ENCODE measurements at regions of chr16 and their contacts with region 1.

Region 1: GRCh38 chr16:87062569-87063442 is 254.4 kb downstream of the C16orf95 start:
- DNase-seq: peak; percentile 81
- ATAC-seq: peak; percentile 95

Region 2: DNA sequence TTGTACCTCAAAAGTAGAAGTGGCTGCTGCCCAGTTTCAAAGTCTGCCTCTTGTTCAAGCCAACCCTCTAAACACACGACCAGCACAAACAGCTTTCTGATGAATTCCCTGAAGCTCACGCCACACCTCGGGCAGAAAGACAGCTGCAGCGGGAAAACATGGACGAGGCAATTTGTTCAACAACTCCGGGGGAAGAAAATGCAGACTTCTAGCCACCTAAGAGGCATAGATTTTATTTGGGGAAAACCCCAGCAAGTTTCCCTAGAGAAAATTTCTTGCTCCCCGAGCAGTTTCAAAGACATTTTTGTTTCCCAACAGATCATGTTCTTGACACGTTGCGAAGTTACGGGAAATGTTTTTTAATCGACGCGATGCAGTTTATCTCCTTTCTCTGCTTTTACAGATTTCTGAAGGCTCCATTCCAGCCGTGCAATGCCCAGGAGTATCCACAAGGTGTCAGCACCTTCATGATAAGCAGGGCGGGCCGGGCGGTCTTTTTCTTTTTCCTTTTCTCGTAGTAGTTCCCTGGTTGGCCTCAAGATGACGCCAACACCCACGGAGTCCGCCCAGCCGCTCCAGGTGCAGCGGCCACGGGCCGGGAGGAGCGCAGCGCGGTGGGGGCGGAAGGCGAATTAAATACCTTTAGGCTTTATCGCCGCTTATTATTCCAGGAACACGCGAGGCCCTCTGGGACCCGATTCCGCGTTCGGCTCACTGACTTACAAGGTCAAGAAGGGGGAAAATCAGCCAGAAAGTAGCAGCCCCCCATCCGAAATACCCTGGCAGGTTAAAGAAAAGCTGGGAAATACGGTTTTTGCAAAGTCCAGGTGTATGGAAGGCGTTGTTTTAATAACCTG is 499.1 kb before region 1 on chr16:
- intact Hi-C with region 1: loop called (anchors 5 kb)
- DNase-seq: peak; percentile 90
- ATAC-seq: peak; percentile 71

Region 3: DNA sequence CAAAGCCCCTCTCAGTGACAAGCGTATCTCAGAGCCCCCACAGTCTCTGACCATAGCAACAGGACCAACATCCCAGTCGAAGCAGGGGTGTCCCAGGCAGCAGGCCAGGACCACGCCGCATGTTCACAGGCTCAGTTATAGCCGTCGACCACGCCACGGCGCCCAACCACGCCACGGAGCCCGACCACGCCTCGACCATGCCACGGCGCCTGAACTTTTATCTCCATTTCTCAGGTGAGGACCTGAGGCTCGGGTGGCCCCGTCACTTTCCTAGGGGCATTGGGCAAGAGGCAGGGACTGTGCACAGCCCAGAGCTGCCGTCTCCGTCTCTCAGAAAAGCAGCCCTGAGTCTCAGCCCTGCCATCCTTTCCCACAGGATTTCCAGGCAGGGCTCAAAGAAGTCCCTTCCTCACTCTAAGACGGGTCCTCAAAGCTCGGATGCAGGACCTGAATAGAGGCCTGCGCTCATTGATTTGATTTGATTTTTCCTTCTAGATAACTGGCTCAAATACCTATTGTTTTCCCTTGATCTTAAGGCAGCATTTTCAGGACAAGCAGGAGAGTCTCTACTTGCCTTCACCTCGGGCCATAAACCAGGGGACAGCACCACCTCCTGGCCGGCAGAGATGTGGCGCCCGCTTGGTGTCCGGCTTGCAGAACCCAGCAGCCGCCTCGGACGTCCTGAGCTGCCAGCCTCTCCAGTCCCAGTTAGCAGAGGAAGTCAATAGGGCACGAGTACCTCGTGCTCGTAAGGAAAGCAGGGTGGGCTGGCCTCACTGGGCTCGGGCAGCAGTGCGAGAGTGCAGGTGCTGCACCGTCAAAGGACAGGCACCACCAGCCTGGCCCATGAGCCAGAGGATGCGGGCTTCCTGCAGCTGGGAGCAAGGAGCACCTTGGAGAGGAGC is 215.6 kb after region 1 on chr16:
- intact Hi-C with region 1: loop called (anchors 10 kb)
- DNase-seq: peak; percentile 86
- ATAC-seq: peak; percentile 98

Measured in left ventricle myocardium superior (tissue), 1 donor.